ENCODE measurements at regions of chr4 and their contacts with region 1.

Region 1: DNA sequence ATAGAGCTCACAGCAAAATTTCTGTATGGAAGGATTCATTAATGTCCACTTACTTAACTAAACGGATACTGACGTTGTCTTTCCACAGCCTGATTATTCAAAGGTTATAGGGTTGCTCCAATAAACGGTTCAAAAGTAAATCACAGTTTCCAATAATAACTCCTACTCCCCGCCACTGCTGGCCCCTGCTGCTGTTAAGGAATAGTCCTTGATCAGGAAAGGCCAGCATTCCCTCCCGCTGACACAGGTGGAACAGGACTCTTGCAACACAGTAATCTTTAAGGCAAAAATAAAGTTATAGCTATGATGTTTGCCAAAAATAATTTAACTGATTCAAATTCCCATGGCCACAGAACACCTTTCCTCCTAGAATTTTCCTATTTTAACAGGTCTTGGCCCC is 53.9 kb downstream of the FAT1 start:
- DNase-seq: no peak
- ATAC-seq: peak; percentile 45

Region 2: DNA sequence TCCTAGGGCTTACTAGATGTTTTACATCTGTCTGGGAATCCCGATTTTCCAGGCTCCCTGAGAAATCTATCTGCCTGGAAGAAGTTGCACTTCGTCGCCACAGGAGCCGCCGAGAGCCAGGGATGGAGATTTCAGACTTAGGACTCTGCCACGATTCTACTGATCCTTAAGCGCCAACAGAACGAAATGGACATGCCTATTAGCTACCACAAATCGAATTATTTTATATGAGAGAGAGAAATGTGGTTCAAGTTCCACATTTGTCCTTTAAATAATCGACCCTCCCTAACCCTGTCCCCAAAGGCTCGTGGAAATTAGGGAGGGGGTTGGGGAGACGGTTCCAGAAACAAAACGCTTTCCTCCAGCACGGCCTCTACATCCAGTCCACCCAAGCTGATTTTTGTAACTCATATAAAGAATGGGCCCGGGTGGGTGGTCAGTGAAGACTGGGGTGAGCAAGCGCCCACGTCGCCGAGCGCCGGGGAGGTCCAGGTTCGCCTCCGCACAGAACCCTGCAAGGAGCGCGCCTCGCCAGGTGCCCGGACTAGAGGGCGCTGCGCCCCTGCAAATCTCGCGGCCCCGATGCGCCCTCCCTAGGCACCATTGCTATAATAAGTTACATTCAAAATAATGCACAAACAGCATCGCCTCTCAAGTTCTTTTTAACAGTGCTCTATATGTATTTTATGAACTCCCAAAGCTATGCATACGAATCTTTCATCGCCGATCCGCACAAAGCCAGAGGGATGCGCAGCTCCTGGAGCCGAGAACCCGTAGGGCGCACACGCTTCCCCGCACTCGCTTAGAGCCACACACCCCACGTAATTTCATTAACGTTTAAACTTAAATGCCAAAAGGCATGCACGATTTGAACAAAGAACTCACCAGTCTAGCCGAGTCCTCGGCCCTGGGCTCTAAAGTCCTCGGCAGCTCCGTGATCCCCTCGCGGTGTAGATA is 56.0 kb after region 1 on chr4:
- intact Hi-C with region 1: loop called (anchors 5 kb)
- DNase-seq: peak; percentile 87
- ATAC-seq: peak; percentile 91

Measured in sciatic nerve (tissue), 2 donors.